Activated T-helper 2 cell treated with anti-CD3 and anti-CD28 coated beads, Interferon-gamma antibody, Interleukin-2, Interleukin-4, amounts not matched to agents 10 μg/mL and 5 μg/mL and 100 μg/mL, durations not matched to agents 14 hours and 24 hours and 36 hours (primary cell): ENCODE measurements at regions of chr5 and their contacts with region 1.

Region 1: GRCh38 chr5:157540707-157541446 is 34.7 kb downstream of the ADAM19 start:
- DNase-seq: peak; percentile 59
- H3K4me3 Mint-ChIP-seq: peak overlapping the region; percentile 56
- H3K27ac Mint-ChIP-seq: peak overlapping the region; percentile 85
- H3K4me1 Mint-ChIP-seq: peaks cover 82% of the 10 kb centered on the region
- H3K27me3 Mint-ChIP-seq: no peaks in the 10 kb centered on the region

Region 2: GRCh38 chr5:157271740-157272271 is 269.1 kb before region 1 on chr5:
- intact Hi-C with region 1: loop called (anchors 5 kb)
- DNase-seq: peak; percentile 85
- H3K4me3 Mint-ChIP-seq: peak overlapping the region; percentile 82
- H3K27ac Mint-ChIP-seq: peak overlapping the region; percentile 99
- H3K4me1 Mint-ChIP-seq: peaks cover 88% of the 10 kb centered on the region
- H3K27me3 Mint-ChIP-seq: no peaks in the 10 kb centered on the region

Region 3: DNA sequence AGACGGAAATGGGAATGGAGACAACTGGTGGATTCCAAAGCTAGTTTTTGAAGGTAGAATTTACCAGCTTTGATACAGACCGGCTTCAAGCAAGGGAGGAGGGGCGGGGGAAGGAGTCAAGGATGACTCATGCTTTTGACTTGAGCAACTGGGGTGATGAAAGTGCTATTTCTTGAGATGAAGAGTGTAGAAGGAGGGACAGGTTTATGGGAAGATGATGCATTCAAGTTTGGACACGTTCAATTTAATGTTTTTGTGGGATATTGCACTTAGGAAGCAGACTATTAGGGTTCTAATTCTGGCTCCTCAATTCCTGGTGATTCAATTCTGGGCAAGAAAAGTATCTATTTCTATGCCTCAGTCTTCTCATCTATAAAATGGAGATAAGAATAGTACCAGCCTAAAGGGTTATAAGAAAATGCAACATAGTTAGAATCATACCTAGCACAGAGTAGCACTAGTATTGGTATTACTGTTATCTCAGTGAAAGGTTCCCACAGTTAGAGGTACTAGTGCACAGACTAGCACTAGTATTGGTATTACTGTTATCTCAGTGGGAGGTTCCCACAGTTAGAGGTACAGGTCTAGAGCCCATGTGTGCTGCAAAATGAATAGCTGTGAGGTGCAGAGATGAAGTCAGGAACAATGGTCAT is 76.2 kb before region 1 on chr5:
- intact Hi-C with region 1: loop called (anchors 2 kb)
- DNase-seq: peak; percentile 43
- H3K4me3 Mint-ChIP-seq: no peak overlapping the region
- H3K27ac Mint-ChIP-seq: peak overlapping the region; percentile 82
- H3K4me1 Mint-ChIP-seq: peaks cover 32% of the 10 kb centered on the region
- H3K27me3 Mint-ChIP-seq: peaks cover 17% of the 10 kb centered on the region

Region 4: DNA sequence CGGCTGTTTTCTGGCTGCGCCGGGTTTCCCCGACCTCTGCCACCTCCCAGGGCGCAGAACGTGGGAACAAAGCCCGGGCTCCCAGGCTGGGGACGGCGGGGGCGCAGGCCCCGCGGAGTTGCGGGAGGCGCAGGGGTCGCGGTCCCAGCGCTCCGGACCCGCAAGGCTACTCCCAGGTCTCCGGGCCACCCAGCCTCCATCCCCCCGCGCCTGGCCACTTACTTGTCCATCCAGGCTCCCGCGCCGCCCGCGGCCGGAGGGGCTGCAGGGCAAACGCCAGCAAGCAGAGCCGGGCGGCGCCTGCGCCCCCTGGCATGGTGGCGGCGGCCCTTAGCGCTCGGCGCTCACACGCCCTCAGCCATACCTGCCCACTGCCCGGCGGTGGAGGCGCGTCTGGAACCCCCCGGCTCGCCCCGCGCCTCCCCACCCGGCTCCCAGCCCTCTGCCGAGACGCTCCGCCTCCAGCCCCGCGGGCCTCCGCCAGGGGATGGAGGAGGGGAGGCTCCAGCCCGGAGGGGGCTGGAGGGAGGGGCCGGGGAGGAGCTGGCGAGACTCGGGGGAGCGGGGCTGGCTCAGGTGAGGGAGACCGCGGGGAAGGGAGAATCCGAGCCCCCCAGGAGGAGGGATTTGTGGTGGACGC is 34.6 kb after region 1 on chr5 and contains the start of gene ADAM19:
- intact Hi-C with region 1: loop called (anchors 1 kb)
- DNase-seq: peak; percentile 43
- H3K4me3 Mint-ChIP-seq: peak within 1 kb of the TSS; percentile 94
- H3K27ac Mint-ChIP-seq: peak within 1 kb of the TSS; percentile 84
- H3K4me1 Mint-ChIP-seq: peaks cover 62% of the 10 kb centered on the region
- H3K27me3 Mint-ChIP-seq: no peaks in the 10 kb centered on the region
- total RNA-seq, gene ADAM19: 229 and 237 TPM in 2 replicates

Region 5: DNA sequence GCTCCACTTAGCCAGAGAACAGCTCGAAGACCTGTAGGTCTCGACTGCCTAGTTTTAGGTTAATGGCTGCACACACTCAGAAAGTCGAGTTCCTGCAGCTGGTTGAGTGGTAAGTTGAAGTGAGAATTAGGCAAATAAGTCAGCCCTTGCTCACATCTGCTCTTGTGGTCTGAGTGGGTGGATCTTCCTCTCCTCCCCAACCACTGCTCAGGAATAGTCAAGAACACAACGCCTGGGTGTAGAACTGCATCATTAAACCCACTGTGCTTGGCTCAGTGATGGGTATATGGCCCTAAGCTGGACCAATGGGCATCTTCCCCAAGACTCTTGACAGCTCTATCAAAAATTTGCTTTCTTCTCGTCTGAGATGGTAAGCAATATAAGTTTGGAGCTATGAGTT is 55.6 kb after region 1 on chr5:
- intact Hi-C with region 1: loop called (anchors 1 kb)
- DNase-seq: peak; percentile 49
- H3K4me3 Mint-ChIP-seq: no peak overlapping the region
- H3K27ac Mint-ChIP-seq: peak overlapping the region; percentile 21
- H3K4me1 Mint-ChIP-seq: peaks cover 90% of the 10 kb centered on the region
- H3K27me3 Mint-ChIP-seq: no peaks in the 10 kb centered on the region

Region 6: DNA sequence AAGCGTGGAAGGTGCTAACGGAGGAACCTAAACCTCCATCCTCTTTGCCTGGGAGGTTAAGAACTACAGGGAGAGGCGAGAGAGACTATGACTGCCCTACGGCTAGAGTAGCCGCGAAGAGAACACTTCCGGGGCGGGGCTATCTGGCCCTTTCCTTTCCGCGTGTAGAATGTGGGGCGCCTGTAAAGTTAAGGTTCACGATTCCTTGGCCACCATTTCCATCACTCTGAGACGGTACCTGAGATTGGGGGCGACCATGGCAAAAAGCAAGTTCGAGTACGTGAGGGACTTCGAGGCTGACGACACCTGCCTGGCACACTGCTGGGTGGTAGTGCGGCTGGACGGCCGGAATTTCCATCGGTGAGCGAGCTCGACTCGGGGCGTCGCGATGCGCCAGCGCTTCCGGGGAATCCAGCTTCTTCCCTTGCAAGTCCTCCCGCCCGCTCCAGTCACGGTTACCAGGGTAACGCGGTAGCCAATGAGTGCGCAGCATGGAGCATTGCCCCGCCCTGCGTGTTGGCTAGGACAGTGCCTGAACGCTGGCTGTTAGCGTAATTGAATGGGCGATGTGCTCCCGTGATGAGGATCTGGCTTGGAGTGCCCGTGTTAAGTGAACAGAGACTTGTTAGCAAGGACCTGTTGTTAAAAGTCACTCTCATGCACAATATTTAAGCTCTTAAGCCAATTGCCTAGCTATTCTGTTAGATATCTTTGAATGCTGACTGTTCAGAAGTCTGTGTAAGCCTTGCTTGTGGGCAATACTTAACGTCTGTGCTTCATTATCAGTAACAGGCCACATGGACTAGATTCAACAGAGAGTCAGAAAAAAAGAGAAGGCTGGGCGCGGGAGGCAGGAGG is 190.6 kb after region 1 on chr5 and contains the start of gene THG1L:
- intact Hi-C with region 1: loop called (anchors 2 kb)
- DNase-seq: peak; percentile 97
- H3K4me3 Mint-ChIP-seq: peak within 1 kb of the TSS; percentile 90
- H3K27ac Mint-ChIP-seq: peak within 1 kb of the TSS; percentile 95
- H3K4me1 Mint-ChIP-seq: peaks cover 26% of the 10 kb centered on the region
- H3K27me3 Mint-ChIP-seq: no peaks in the 10 kb centered on the region
- total RNA-seq, gene THG1L: 28.8 and 29.3 TPM in 2 replicates